ENCODE measurements at regions of chr11 and their contacts with region 1.

Region 1: GRCh38 chr11:113314389-113315301 is at the start of gene TTC12:
- DNase-seq: peak; percentile 79 to 94
- H3K4me3 ChIP-seq: peak within 1 kb of the TSS; percentile 83
- H3K27ac ChIP-seq: no peak within 1 kb of the TSS
- H3K4me1 ChIP-seq: peaks cover 16% of the 10 kb centered on the region
- H3K27me3 ChIP-seq: no peaks in the 10 kb centered on the region
- CTCF ChIP-seq: no peak
- total RNA-seq, gene TTC12: 24.8 and 25.0 TPM in 2 replicates

Region 2: GRCh38 chr11:113261709-113262475 is 52.8 kb before region 1 on chr11:
- CTCF ChIA-PET with region 1: no interaction called
- POLR2A ChIA-PET with region 1: no interaction called
- intact Hi-C with region 1: no loop called
- DNase-seq: peak in 1 of 2 experiments; percentile 47
- H3K4me3 ChIP-seq: no peak overlapping the region
- H3K27ac ChIP-seq: no peak overlapping the region
- H3K4me1 ChIP-seq: no peaks in the 10 kb centered on the region
- H3K27me3 ChIP-seq: no peaks in the 10 kb centered on the region
- CTCF ChIP-seq: no peak

Region 3: DNA sequence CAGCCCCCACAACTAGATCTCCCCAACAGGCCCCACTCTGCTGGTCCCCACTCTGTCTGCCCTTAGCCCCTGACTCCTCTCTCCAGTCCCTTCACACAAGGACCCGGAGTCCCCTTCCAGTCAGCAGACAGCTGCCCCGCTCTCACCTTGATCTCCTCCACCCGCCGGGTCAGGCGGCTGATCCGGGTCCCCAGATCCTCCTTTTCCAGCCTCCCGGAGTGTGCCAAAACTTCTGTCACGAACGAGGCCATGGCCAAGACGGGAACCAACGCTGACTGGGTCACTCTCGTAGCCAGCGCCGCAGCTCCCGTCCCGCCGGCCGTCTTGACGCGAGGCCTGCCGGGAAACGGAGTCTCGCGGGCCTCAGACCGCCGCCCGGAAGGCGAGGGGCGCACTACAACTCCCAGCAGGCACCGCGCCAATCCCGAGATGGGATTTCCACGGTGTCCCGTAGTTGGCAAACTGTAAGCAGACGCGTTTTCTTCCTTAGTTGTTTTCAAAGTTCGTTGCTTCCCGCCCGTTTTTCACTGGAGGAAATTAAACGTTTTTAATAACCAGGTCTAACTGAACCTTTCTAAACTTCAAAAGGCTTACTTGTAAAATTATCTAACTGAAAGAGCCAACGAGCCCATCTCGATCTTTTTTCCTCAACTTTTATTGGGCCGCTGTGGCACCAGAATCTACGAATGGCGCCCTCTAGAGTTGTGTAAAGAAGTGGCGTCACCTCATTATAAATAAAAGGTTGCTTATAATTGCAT is 458.9 kb after region 1 on chr11 and contains the start of gene ZW10:
- CTCF ChIA-PET with region 1: no interaction called
- POLR2A ChIA-PET with region 1: no interaction called
- intact Hi-C with region 1: loop called (anchors 10 kb)
- DNase-seq: peak; percentile 96
- H3K4me3 ChIP-seq: peak within 1 kb of the TSS; percentile 79
- H3K27ac ChIP-seq: peak within 1 kb of the TSS; percentile 47; the same call in 1 of the 2 replicates
- H3K4me1 ChIP-seq: peaks cover 11% of the 10 kb centered on the region; the same call in 1 of the 2 replicates
- H3K27me3 ChIP-seq: peaks cover 4% of the 10 kb centered on the region; the same call in 1 of the 2 replicates
- CTCF ChIP-seq: peak; percentile 98
- total RNA-seq, gene ZW10: 14.0 and 19.3 TPM in 2 replicates

Region 4: GRCh38 chr11:113974741-113975470 is 660.3 kb after region 1 on chr11 and contains the start of gene HTR3A:
- CTCF ChIA-PET with region 1: no interaction called
- POLR2A ChIA-PET with region 1: no interaction called
- intact Hi-C with region 1: loop called (anchors 5 kb)
- DNase-seq: peak; percentile 53 to 62
- H3K4me3 ChIP-seq: no peak within 1 kb of the TSS
- H3K27ac ChIP-seq: no peak within 1 kb of the TSS
- H3K4me1 ChIP-seq: peaks cover 7% of the 10 kb centered on the region; the same call in 1 of the 2 replicates
- H3K27me3 ChIP-seq: peaks cover 96% of the 10 kb centered on the region
- CTCF ChIP-seq: no peak
- total RNA-seq, gene HTR3A: not detected in 2 replicates